ENCODE measurements at regions of chr1 and their contacts with region 1.

Region 1: GRCh38 chr1:98761219-98761865 is 99.8 kb downstream of the SNX7 start:
- DNase-seq: no peak
- H3K4me3 ChIP-seq: no peak overlapping the region
- H3K27ac ChIP-seq: no peak overlapping the region
- H3K4me1 ChIP-seq: no peaks in the 10 kb centered on the region
- H3K27me3 ChIP-seq: no peaks in the 10 kb centered on the region
- CTCF ChIP-seq: peak; percentile 46 to 58 (median 54)
- EP300 ChIP-seq: no peak
- POLR2A ChIP-seq: no peak
- RAD21 ChIP-seq: peak; percentile 61 to 75

Region 2: GRCh38 chr1:98749152-98749756 is 12.1 kb before region 1 on chr1:
- CTCF ChIA-PET with region 1: interaction called, 21 read pairs
- POLR2A ChIA-PET with region 1: no interaction called
- DNase-seq: no peak
- H3K4me3 ChIP-seq: no peak overlapping the region
- H3K27ac ChIP-seq: no peak overlapping the region
- H3K4me1 ChIP-seq: no peaks in the 10 kb centered on the region
- H3K27me3 ChIP-seq: no peaks in the 10 kb centered on the region
- CTCF ChIP-seq: no peak; a peak in 1 of 4 replicates
- EP300 ChIP-seq: no peak
- POLR2A ChIP-seq: no peak
- RAD21 ChIP-seq: peak in 1 of 2 experiments; percentile 11; a peak in 1 of 4 replicates

Measured in H1 (cell line).